HAP-1 (cell line): ENCODE measurements at regions of chr19 and their contacts with region 1.

Region 1: DNA sequence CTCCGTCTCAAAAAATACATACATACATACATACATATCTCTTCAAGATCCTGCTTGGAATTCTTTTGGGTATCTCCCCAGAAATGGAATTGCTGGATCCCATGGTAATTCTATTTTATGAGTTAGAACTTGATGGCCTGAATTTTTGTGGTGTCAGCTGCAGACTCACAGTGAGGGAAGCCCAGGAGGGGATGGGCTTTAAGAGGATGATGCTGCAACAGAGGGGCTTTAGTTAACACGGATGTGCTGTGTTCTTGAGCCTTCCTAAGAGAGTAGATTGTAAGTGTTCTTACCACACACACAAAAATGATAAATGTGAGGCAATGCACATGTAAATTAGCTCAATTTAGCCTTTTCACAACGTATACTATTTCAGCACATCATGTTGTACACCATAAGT is 31.8 kb downstream of the CACNG6 start:
- DNase-seq: no peak
- H3K4me3 ChIP-seq: no peak overlapping the region
- H3K4me1 ChIP-seq: no peaks in the 10 kb centered on the region
- H3K27me3 ChIP-seq: no peaks in the 10 kb centered on the region

Region 2: GRCh38 chr19:53844849-53845246 is 178.3 kb before region 1 on chr19:
- in situ Hi-C with region 1: loop called (anchors 5 kb)
- DNase-seq: no peak
- H3K4me3 ChIP-seq: no peak overlapping the region
- H3K4me1 ChIP-seq: no peaks in the 10 kb centered on the region
- H3K27me3 ChIP-seq: no peaks in the 10 kb centered on the region

Region 3: GRCh38 chr19:53892981-53893325 is 130.2 kb before region 1 on chr19:
- in situ Hi-C with region 1: no loop called
- DNase-seq: peak in 1 of 2 experiments; percentile 35
- H3K4me3 ChIP-seq: no peak overlapping the region
- H3K4me1 ChIP-seq: no peaks in the 10 kb centered on the region
- H3K27me3 ChIP-seq: peaks cover under 1% of the 10 kb centered on the region; the same call in 1 of the 2 replicates